Calu3 (cell line): ENCODE measurements at regions of chr17 and their contacts with region 1.

Region 1: GRCh38 chr17:20155258-20156195 is 146.4 kb downstream of the SPECC1 start:
- DNase-seq: peak; percentile 97
- H3K4me3 Mint-ChIP-seq: no peak overlapping the region
- H3K27ac Mint-ChIP-seq: peak overlapping the region; percentile 43
- H3K4me1 Mint-ChIP-seq: peaks cover 12% of the 10 kb centered on the region
- H3K27me3 Mint-ChIP-seq: no peaks in the 10 kb centered on the region
- CTCF ChIP-seq: no peak

Region 2: GRCh38 chr17:20206068-20206467 is 50.5 kb after region 1 on chr17:
- CTCF ChIA-PET with region 1: interaction called, 5 read pairs
- intact Hi-C with region 1: loop called (anchors 10 kb)
- DNase-seq: peak; percentile 21
- H3K4me3 Mint-ChIP-seq: no peak overlapping the region
- H3K27ac Mint-ChIP-seq: peak overlapping the region; percentile 50
- H3K4me1 Mint-ChIP-seq: peaks cover 30% of the 10 kb centered on the region
- H3K27me3 Mint-ChIP-seq: no peaks in the 10 kb centered on the region
- CTCF ChIP-seq: no peak